ENCODE measurements at regions of chr19 and their contacts with region 1.

Region 1: GRCh38 chr19:15251749-15252397 is 19.6 kb upstream of the EPHX3 start:
- DNase-seq: peak; percentile 57 to 94
- H3K4me3 ChIP-seq: peak overlapping the region; percentile 37 to 49
- H3K27ac ChIP-seq: peak overlapping the region; percentile 96 to 99
- H3K4me1 ChIP-seq: peaks cover 39 to 64% of the 10 kb centered on the region in 2 donors
- H3K27me3 ChIP-seq: no peaks in the 10 kb centered on the region
- CTCF ChIP-seq: peak; percentile 53 to 66 (median 54)

Region 2: DNA sequence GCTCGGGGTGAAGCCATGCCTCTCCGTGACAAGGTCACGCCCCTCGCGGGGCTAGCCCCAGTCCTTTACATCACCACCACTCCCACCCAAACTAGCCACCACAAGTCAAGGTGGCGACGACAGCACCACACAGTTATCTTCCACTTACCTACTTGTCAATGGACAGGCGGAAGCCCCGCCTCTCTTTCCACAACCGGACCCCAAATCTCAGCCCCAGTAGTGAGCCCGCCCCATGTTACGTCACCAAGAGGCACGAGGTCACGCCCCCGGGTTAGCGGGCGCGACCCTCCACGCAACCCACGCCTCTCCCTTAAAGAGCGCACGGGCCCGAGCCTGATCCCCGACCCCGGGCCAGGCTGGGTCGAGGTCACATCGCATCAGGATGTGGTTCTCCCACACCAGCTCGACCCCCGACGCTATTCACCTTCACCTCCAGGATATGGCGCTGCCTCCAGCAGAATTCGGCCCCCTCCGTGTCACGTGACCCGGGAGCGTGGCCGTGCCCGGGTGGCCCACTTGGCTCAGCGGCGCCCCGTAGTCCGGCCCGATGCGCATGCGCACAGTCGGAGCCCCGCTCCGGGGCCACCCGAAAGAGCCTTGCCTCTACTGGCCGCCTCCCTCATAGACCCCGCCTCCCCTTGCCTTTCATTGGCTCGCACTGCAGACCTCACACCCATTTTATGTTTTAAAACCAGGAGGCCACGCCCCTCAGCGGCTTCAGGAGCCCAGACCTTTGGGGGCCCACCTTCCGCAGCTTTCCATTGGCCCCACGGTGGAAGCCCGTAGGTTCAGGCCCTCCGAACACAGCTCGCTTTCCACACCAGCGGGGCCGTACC is 126.4 kb before region 1 on chr19:
- intact Hi-C with region 1: loop called (anchors 5 kb)
- DNase-seq: peak; percentile 95 to 99
- H3K4me3 ChIP-seq: peak overlapping the region; percentile 60 to 84
- H3K27ac ChIP-seq: peak overlapping the region; percentile 81 to 89
- H3K4me1 ChIP-seq: peaks cover 3 to 12% of the 10 kb centered on the region in 2 donors
- H3K27me3 ChIP-seq: no peaks in the 10 kb centered on the region
- CTCF ChIP-seq: no peak

Region 3: DNA sequence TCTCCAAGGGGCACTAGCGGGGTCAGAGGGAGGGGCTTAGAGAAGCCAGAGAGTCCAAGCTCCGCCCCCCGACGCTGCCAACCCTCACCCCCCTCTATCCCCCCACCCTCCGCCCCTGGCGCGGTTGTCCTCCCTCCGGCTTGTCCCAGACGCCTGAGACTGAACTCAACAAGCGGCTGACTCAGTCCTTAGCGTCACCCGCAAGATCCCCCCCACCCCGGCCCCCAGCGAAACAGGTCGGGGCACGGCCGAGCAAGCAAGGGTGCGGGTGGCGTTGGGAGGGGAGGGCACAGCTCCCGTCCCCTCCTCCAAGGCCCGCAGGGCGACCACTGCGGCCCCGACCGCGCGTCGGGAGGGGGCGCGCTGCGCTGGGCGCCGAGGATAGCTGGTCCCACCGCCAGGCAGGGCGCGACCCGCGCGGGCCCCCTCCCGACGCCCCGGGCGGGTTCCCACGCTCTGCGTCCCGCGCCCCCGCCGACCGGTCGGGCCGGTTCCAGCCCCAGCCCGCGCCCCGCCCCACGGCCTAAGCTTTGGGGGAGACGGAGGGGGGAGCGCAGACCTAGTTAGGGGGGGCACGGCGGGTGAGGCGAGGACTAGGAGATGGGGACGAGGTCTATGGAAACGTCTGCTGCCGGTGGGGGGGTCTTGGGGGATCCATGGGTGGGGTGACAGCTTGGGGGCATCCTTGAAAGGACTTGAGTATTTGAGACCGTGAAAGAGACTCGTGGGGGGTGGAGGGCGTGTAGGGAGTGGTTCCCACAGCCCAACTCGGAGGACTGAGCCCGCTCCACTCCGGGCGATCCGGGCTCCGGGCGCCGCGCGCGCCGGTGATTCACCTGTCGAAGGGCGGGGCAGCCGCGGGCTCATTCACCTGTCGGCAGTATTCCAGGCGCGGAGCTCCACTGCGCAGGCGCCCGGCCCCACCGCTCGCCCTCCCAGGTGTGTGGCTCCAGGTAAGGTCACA is 56.2 kb before region 1 on chr19:
- intact Hi-C with region 1: loop called (anchors 1 kb)
- DNase-seq: peak; percentile 57 to 93
- H3K4me3 ChIP-seq: peak overlapping the region; percentile 58 to 69
- H3K27ac ChIP-seq: peak overlapping the region; percentile 96
- H3K4me1 ChIP-seq: peaks cover 0 to 35% of the 10 kb centered on the region in 2 donors
- H3K27me3 ChIP-seq: no peaks in the 10 kb centered on the region
- CTCF ChIP-seq: peak in 1 of 3 experiments; percentile 14

Region 4: GRCh38 chr19:15264061-15264932 is 12.4 kb after region 1 on chr19:
- intact Hi-C with region 1: loop called (anchors 1 kb)
- DNase-seq: peak in 1 of 2 donors; percentile 89
- H3K4me3 ChIP-seq: no peak overlapping the region
- H3K27ac ChIP-seq: peak overlapping the region; percentile 69 to 83
- H3K4me1 ChIP-seq: peaks cover 19 to 40% of the 10 kb centered on the region in 2 donors
- H3K27me3 ChIP-seq: no peaks in the 10 kb centered on the region
- CTCF ChIP-seq: peak; percentile 78 to 87 (median 78)

Region 5: DNA sequence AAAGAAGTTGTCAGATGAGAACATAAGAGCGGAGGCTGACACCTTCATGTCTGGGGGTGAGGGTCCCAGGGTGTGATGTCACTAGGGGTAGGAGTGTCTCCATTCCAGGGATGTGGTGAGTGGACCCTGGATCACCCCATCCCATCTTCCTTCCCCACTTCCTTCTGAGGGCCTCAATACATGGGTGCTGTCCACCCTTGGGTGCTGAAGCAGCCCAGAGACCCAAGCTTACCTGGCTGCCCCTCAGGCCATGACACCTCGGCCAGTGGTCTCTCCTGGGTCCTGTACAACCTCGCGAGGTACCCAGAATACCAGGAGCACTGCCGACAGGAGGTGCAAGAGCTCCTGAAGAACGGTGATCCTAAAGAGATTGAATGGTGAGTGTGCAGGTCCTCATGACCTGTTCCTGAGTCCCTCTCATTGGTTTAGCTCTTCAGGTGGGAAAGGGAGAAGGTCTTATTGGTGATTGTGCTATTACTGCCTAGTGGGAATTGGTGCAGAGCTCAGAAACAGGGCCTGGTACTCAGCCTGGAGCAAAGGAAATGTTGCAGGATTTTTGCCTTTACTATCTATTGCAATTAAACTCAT is 325.4 kb after region 1 on chr19:
- intact Hi-C with region 1: no loop called
- DNase-seq: no peak
- H3K4me3 ChIP-seq: no peak overlapping the region
- H3K27ac ChIP-seq: no peak overlapping the region
- H3K4me1 ChIP-seq: no peaks in the 10 kb centered on the region
- H3K27me3 ChIP-seq: no peaks in the 10 kb centered on the region
- CTCF ChIP-seq: no peak

Region 6: DNA sequence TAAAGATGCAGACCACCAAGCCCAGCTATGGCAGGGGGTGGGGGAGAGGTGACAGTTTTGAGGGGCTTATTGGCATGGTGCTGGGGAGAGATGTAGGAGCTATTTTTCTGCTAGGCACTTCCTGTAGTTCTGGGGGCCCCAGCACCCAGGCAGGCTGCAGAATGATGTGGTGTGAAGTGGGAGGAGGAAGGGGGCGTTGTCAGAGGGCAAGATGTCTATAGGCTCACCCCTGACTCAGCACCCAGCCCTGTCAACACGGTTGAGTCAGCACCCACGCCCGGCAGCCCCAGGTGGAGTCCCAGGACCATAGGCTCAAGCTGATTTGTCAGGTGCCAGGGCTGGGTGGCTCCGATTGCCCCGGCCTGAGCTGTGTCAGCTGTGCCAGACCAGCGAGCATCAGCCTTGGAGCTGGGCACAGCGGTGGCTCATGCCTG is 1078.5 kb after region 1 on chr19:
- intact Hi-C with region 1: loop called (anchors 5 kb)
- DNase-seq: peak; percentile 86 to 94
- H3K4me3 ChIP-seq: no peak overlapping the region
- H3K27ac ChIP-seq: peak overlapping the region; percentile 86 to 96
- H3K4me1 ChIP-seq: peaks cover 5 to 32% of the 10 kb centered on the region in 2 donors
- H3K27me3 ChIP-seq: no peaks in the 10 kb centered on the region
- CTCF ChIP-seq: no peak